ENCODE measurements at regions of chr11 and their contacts with region 1.

Region 1: DNA sequence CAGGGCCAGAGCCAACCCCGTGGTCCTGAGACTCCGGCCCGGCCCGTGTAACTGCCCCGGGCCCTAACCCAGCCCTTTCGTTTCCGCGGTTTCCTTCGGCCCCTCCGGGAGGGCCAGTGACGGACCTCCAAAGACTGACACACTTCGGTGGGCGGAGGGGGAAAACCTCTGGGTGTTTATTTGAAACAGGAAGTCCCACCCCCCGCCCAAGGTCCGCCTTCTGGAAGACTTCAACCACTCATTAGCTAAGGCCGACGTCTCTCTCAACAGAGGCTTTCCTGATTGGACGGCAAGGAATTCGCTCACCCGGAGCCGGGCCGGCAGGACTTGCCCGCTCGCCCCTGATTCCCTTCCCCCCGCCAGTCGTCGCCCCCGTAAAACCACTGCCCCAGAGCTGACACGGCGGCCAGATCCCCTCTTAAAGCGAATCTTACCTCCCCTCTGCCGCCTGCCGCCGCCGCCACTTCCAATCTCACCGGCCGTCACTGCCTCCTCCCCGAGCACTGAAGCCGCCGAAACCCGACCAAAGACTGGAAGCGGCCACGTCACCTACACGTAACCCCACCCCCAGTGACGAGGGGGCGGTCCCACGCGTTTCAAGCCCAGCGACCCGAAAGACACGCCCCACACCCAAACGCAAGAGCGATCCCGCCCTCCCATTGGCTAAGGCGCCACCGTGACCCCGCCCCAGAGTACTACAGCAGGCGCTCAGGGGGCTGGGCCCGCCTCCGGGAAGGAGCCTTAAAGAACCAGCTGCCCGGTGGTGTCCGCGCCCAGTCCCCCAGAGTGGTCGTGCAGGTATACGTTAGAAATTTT is at the start of gene STX5:
- DNase-seq: peak; percentile 99
- H3K4me3 Mint-ChIP-seq: peak within 1 kb of the TSS; percentile 93
- H3K27ac Mint-ChIP-seq: peak within 1 kb of the TSS; percentile 99
- H3K4me1 Mint-ChIP-seq: peaks cover 41% of the 10 kb centered on the region
- H3K27me3 Mint-ChIP-seq: no peaks in the 10 kb centered on the region
- total RNA-seq, gene STX5: 34.2 and 39.9 TPM in 2 replicates

Region 2: DNA sequence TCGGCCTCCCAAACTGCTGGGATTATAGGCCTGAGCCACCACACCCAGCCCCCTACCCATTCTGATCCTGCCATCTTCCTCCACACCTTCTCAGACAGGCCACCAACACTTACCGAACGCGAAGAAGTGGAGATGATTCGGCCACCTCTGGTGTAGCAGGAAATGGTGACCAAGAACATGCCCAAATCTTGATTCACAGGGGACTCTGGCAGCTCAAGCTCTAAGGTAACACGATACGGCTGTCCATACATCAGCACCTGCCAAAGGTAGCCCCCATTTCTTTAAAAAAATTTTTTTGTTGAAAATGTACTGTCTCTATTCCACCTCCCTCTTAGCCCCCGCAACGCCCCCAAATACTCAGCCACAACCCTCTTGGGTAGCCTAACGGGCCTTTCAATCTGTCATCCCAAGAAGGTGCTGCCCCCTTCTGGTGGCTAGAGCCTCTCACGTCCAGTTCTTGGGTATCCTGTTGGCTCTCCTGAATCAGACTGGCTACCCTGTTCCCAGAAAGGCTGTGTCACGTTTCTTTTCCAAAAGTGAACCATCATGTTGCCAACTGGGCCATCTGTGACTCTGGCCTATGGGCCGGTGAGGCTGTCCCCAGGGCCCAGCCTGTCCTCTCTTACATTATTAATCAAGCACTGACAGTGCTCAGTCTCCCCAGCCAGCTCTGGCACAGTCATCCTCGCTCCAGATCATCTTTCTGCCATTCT is 137.1 kb before region 1 on chr11:
- intact Hi-C with region 1: no loop called
- DNase-seq: peak; percentile 61
- H3K4me3 Mint-ChIP-seq: no peak overlapping the region
- H3K27ac Mint-ChIP-seq: peak overlapping the region; percentile 71
- H3K4me1 Mint-ChIP-seq: peaks cover 8% of the 10 kb centered on the region
- H3K27me3 Mint-ChIP-seq: no peaks in the 10 kb centered on the region

Region 3: DNA sequence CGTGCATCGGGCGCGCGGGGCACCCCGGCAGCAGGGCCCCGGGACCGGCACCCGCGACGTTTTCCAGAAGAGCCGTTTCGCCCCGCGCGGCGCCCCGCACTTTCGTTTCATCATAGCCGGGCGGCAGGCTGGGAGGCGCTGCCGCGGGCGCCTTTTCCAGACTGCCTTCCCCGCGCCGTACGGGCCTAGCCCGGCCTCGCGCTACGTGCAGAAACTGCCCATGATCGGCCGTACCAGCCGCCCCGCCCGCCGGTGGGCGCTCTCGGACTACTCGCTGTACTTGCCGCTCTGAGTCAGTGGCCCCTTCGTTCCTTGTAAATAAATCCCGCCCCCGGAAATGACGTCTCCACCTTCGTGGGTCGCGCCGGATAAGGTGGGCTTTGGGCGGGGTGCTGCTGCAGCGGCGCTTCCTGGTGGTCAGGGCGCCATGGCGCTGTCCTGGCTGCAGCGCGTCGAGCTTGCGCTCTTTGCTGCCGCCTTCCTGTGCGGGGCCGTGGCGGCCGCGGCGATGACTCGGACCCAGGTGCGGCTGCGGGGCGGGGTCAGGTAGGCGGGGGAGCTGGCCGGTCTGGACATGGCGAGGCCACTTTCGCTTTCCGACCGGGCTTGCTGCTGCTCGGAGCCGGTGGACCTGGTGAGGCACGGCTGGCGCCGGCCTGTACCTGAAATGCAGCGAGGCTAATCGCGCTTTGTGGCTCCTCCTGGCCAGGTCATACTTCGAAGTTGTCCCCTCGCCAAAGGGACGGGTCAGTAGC is 44.5 kb before region 1 on chr11 and contains the start of gene TMEM179B:
- intact Hi-C with region 1: loop called (anchors 1 kb)
- DNase-seq: peak; percentile 96
- H3K4me3 Mint-ChIP-seq: peak within 1 kb of the TSS; percentile 95
- H3K27ac Mint-ChIP-seq: peak within 1 kb of the TSS; percentile 94
- H3K4me1 Mint-ChIP-seq: peaks cover 42% of the 10 kb centered on the region
- H3K27me3 Mint-ChIP-seq: no peaks in the 10 kb centered on the region
- total RNA-seq, gene TMEM179B: 40.6 and 43.0 TPM in 2 replicates